ENCODE measurements at regions of chr18 and their contacts with region 1.

Region 1: GRCh38 chr18:2281523-2282199 is 289.6 kb downstream of the METTL4 start:
- DNase-seq: no peak
- H3K4me3 ChIP-seq: no peak overlapping the region
- H3K27ac ChIP-seq: no peak overlapping the region
- H3K4me1 ChIP-seq: no peaks in the 10 kb centered on the region
- H3K27me3 ChIP-seq: no peaks in the 10 kb centered on the region
- CTCF ChIP-seq: no peak
- POLR2A ChIP-seq: no peak

Region 2: GRCh38 chr18:1875219-1875618 is 406.4 kb before region 1 on chr18:
- intact Hi-C with region 1: loop called (anchors 5 kb)
- DNase-seq: no peak
- H3K4me3 ChIP-seq: no peak overlapping the region
- H3K27ac ChIP-seq: no peak overlapping the region
- H3K4me1 ChIP-seq: no peaks in the 10 kb centered on the region
- H3K27me3 ChIP-seq: no peaks in the 10 kb centered on the region
- CTCF ChIP-seq: no peak
- POLR2A ChIP-seq: no peak

Region 3: DNA sequence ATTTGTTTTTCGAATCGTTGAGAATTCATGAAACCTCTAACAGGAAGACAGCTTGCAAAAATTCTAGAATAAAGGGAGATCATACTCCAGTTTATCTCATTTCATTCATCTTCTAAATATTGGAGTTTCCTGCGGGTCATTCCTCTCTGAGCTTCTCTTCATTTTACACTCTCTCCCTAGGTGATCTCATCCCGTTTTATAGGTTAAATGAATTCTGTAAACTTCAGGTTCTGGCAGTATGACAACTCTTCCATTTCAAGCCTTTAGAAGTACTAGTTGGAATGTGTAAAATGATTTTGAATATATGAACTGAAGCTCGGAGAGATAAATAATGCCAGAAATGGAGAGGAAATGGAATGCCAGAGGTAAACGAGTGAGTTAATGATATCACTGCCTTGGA is 22.7 kb before region 1 on chr18:
- intact Hi-C with region 1: no loop called
- DNase-seq: no peak
- H3K4me3 ChIP-seq: no peak overlapping the region
- H3K27ac ChIP-seq: no peak overlapping the region
- H3K4me1 ChIP-seq: no peaks in the 10 kb centered on the region
- H3K27me3 ChIP-seq: no peaks in the 10 kb centered on the region
- CTCF ChIP-seq: no peak
- POLR2A ChIP-seq: no peak

Region 4: GRCh38 chr18:2348003-2348402 is 66.3 kb after region 1 on chr18:
- intact Hi-C with region 1: loop called (anchors 2 kb)
- DNase-seq: no peak
- H3K4me3 ChIP-seq: no peak overlapping the region
- H3K27ac ChIP-seq: no peak overlapping the region
- H3K4me1 ChIP-seq: no peaks in the 10 kb centered on the region
- H3K27me3 ChIP-seq: no peaks in the 10 kb centered on the region
- CTCF ChIP-seq: no peak
- POLR2A ChIP-seq: no peak

Region 5: DNA sequence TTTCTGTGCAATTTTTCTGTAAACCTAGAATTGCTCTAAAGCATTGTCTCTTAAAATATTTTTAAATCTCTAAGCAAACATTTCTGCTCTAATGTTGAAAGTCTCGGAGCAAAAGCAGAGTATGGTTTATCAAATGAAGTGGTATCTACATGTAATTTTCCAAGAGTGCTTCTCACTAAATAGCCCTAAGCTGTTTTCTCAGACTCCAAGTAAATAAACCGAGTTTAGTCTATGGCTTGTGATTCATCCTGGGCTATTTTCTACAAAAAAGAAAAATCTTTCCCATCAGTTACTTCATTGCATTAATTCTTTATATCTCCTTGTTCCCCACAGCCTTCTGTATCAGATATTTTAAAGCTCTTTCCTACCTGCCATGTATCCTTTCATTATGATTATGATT is 198.9 kb after region 1 on chr18:
- intact Hi-C with region 1: no loop called
- DNase-seq: no peak
- H3K4me3 ChIP-seq: no peak overlapping the region
- H3K27ac ChIP-seq: no peak overlapping the region
- H3K4me1 ChIP-seq: no peaks in the 10 kb centered on the region
- H3K27me3 ChIP-seq: no peaks in the 10 kb centered on the region
- CTCF ChIP-seq: no peak
- POLR2A ChIP-seq: no peak